Activated T-helper 1 cell treated with anti-CD3 and anti-CD28 coated beads, Interleukin-12 subunit alpha, Interleukin-12 subunit beta, Interleukin-2, Interleukin-4 antibody, amounts not matched to agents 30 ng/mL and 10 ng/mL and 1 ng/mL, durations not matched to agents 14 hours and 24 hours and 36 hours (primary cell): ENCODE measurements at regions of chr21 and their contacts with region 1.

Region 1: DNA sequence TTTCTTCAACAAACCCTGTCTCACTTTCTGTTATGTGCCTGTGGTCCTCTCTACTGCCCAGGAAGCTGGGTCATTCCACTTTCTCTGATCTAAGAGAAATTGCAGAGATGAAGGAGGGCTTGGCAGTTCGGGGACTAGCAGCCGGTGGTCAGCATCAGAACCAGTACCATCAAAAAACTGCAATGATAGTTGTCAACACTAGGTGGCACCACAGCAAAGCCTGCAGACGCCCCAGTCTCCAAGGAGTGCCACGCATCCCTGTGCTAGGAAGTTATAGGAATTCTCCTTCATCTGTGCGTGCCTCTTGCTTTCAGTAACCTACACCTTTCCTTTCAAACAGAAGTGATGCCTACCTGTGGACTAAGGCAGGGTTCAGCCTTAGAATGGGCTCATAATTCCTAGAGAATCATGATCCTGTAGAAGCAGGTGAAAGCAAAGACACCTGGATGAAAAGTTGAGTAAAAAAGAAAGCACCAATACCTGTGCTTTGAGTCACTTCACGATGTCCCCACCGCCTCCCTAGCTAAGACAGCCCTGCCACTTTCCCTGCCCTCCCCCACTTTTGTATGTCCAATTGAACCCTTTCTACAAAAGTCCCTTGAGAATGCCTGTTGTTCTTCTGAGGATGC is 129.2 kb downstream of the ADAMTS1 start:
- DNase-seq: no peak
- H3K4me3 Mint-ChIP-seq: no peak overlapping the region
- H3K27ac Mint-ChIP-seq: no peak overlapping the region
- H3K4me1 Mint-ChIP-seq: no peaks in the 10 kb centered on the region
- H3K27me3 Mint-ChIP-seq: no peaks in the 10 kb centered on the region

Region 2: GRCh38 chr21:25895565-25896205 is 820.3 kb before region 1 on chr21:
- intact Hi-C with region 1: loop called (anchors 1 kb)
- DNase-seq: no peak
- H3K4me3 Mint-ChIP-seq: no peak overlapping the region
- H3K27ac Mint-ChIP-seq: no peak overlapping the region
- H3K4me1 Mint-ChIP-seq: peaks cover 7% of the 10 kb centered on the region
- H3K27me3 Mint-ChIP-seq: no peaks in the 10 kb centered on the region